Mammary epithelial cell (primary cell): ENCODE measurements at regions of chr18 and their contacts with region 1.

Region 1: GRCh38 chr18:48538531-48539405 is at the start of gene CTIF:
- DNase-seq: peak; percentile 94
- H3K4me3 ChIP-seq: peak within 1 kb of the TSS; percentile 77 to 96 (median 92)
- H3K27ac ChIP-seq: peak within 1 kb of the TSS; percentile 91
- H3K4me1 ChIP-seq: peaks cover 25% of the 10 kb centered on the region
- H3K27me3 ChIP-seq: no peaks in the 10 kb centered on the region
- CTCF ChIP-seq: no peak
- total RNA-seq, gene CTIF: 68.8 to 70.8 TPM

Region 2: DNA sequence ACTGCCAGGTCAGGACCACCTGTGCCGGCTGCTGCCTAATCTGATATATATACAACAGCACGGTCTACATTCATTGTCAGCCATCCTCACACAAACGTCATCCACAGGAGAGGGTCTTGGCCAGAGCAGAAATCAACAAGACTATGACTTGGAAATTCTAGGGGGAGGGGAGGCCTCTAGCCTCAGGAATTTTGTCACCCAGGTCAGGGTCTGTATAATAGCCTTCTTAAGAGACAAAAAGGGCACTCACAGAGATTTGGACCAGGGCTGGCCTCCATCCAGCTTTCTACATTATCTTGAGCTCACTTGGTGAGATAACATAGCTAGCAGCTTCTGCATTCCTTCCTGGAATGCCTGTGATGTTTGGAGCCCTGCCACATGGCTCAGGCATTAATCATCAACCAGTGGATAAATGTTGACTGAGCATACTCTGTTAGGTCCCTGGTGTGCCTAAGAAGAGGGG is 50.3 kb before region 1 on chr18:
- CTCF ChIA-PET with region 1: no interaction called
- dilution Hi-C with region 1: no loop called
- in situ Hi-C with region 1: no loop called
- intact Hi-C with region 1: loop called (anchors 1 kb)
- DNase-seq: peak; percentile 73
- H3K4me3 ChIP-seq: no peak overlapping the region
- H3K27ac ChIP-seq: no peak overlapping the region
- H3K4me1 ChIP-seq: peaks cover 16% of the 10 kb centered on the region
- H3K27me3 ChIP-seq: no peaks in the 10 kb centered on the region
- CTCF ChIP-seq: no peak

Region 3: GRCh38 chr18:48563043-48563442 is 24.3 kb after region 1 on chr18:
- CTCF ChIA-PET with region 1: no interaction called
- dilution Hi-C with region 1: no loop called
- in situ Hi-C with region 1: no loop called
- intact Hi-C with region 1: loop called (anchors 2 kb)
- DNase-seq: peak; percentile 73
- H3K4me3 ChIP-seq: no peak overlapping the region
- H3K27ac ChIP-seq: no peak overlapping the region
- H3K4me1 ChIP-seq: peaks cover 21% of the 10 kb centered on the region
- H3K27me3 ChIP-seq: no peaks in the 10 kb centered on the region
- CTCF ChIP-seq: no peak

Region 4: DNA sequence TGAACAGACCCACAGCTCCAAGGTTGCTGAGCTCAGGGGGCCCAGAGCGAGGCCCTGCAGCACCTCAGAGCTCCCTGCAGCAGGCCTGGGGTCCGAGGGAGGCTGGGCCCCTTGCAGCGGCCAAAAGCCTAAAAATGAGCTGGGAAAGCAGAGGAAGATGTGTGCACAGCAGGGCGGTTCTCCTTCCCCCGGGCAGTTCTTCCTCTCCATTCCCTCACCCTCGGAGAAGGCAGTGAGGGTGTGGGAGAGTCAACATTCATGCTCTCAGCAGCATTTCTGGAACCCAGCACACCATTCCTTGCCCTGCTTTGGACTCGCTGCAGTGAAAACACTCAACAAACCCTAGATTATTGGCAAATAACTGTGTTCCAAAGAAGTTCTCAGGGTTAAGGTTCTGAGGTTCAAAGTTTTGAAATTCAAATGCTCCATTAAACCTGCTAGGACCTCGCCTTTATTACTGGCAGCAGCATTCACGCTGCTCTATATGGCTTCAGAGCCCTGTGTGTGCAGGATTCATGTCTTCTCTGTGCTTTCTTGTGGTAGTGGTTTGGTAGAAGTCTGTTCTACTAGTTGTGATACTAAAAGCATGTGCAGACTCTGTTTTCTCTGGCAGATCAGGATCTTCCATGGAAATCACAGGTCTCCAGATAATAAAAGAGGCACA is 79.2 kb after region 1 on chr18:
- CTCF ChIA-PET with region 1: no interaction called
- dilution Hi-C with region 1: no loop called
- in situ Hi-C with region 1: no loop called
- intact Hi-C with region 1: no loop called
- DNase-seq: no peak
- H3K4me3 ChIP-seq: no peak overlapping the region
- H3K27ac ChIP-seq: no peak overlapping the region
- H3K4me1 ChIP-seq: peaks cover 40% of the 10 kb centered on the region
- H3K27me3 ChIP-seq: no peaks in the 10 kb centered on the region
- CTCF ChIP-seq: no peak

Region 5: DNA sequence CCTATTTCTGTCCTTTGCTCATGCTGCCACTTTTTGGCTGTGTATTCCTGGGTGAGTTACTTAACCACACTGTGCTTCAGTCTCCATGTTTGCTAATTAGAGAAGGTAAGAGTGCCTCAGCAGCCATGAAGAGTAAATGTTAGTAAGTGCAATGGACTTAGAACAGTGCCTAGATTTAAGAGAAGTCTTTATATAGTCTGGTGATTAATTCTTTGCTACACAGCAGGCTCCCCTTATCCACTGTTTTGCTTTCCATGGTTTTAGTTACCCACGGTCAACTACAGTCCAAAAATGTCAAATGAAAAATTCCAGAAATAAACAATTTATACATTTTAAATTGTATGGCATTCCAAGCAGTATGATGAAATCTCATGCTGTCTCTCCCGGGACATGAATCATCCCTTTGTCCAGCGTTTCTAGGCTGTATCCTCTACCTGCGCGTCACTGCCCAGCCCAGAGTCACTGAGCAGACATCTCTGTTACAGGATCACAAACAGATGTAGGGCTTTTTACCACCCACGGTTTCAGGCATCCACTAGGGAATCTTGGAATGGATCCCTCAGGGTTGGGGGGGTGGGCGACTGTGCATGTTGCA is 91.1 kb after region 1 on chr18:
- CTCF ChIA-PET with region 1: no interaction called
- dilution Hi-C with region 1: no loop called
- in situ Hi-C with region 1: no loop called
- intact Hi-C with region 1: loop called (anchors 1 kb)
- DNase-seq: peak; percentile 83
- H3K4me3 ChIP-seq: no peak overlapping the region
- H3K27ac ChIP-seq: peak overlapping the region; percentile 85
- H3K4me1 ChIP-seq: peaks cover 12% of the 10 kb centered on the region
- H3K27me3 ChIP-seq: no peaks in the 10 kb centered on the region
- CTCF ChIP-seq: no peak